Activated CD8-positive, alpha-beta T cell treated with anti-CD3 and anti-CD28 coated beads, Interleukin-2, amount 10 ng/mL, durations not matched to agents 7 days and 5 days (primary cell): ENCODE measurements at regions of chr6 and their contacts with region 1.

Region 1: GRCh38 chr6:30828027-30828960 is 56.0 kb upstream of the DDR1 start:
- DNase-seq: peak; percentile 88
- ATAC-seq: peak; percentile 82
- H3K4me3 Mint-ChIP-seq: peak overlapping the region; percentile 82
- H3K27ac Mint-ChIP-seq: peak overlapping the region; percentile 91
- H3K4me1 Mint-ChIP-seq: peaks cover 69% of the 10 kb centered on the region
- H3K27me3 Mint-ChIP-seq: no peaks in the 10 kb centered on the region

Region 2: DNA sequence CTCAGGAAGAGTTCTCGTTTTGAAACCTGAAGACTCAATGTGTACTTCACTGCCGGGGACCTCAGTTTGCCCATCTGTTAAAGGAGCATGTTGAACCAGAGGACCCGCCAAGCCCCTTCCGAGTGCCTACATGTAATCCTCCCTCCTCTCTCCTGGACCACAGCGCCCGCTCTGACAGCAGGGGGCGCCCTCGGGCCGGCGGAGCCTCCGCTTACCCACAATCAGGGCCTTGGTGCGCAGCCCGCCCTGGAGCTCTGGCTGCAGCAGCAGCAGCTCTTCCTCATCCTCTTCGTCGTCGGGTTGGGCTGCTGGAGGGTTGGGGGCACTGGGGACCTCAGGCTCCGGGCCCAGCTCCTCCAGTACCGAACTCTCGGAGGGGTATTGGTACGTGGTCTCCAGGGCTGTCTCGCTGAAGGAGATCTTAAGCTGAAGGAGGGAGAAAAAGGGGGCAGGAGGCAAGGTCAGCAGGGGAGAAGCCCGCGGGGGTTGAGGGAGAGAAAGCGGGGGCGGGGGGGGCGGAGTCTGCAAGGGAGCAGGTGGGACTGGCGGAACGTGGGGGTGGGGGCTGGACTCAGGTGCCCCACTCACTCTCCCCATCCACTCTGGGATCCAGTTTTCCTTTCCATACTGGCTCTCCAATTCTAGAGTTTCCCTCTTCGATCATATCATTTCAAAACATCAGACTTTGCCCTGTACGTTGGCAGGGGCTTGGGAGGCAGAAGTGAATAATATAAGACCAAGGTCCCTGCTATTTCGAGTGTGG is 149.1 kb before region 1 on chr6:
- CTCF ChIA-PET with region 1: interaction called, 11 read pairs
- POLR2A ChIA-PET with region 1: no interaction called
- DNase-seq: peak; percentile 94
- ATAC-seq: peak; percentile 54
- H3K4me3 Mint-ChIP-seq: peak overlapping the region; percentile 93
- H3K27ac Mint-ChIP-seq: peak overlapping the region; percentile 98
- H3K4me1 Mint-ChIP-seq: peaks cover 30% of the 10 kb centered on the region
- H3K27me3 Mint-ChIP-seq: no peaks in the 10 kb centered on the region

Region 3: DNA sequence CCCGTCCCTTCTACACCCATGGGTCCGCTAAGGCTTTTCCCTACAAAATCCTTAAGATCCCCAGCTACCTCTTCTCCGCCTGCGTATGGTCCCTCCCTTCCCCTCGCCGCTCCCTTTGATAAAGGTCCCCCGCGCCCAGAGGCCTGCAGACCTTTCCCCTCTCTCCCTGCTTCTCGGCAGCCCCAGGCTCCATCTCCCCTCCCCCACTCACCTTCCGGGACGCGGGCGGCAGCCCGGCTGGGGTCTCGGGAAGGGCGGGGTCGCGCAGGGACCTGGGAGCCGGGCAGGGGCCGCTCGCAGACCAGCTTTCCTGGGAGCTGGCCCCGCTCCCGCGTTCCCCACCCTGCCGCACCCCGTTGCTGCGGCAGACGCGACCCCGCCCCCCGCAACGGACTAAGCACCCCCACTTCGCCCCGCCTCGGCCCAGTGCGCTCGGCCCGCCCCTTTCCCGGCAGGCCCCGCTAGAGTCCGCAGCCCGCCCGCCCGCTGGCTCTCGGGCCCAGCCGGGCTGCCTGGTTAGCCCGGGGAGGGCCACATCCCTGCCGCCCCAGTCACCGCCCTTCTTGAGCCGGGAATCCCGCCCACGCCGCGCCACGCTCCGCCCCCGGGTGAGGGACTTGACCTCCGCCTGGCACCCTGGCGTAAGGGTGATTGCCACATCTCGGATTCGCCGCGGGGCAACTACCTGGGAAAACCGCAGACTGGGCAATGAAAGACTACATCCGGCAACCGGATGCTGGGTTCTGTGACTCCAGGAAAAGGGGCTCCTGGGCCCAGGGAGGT is 85.8 kb before region 1 on chr6 and contains the start of gene FLOT1:
- CTCF ChIA-PET with region 1: interaction called, 10 read pairs
- POLR2A ChIA-PET with region 1: interaction called, 5 read pairs
- DNase-seq: peak; percentile 98
- ATAC-seq: peak; percentile 78
- H3K4me3 Mint-ChIP-seq: peak within 1 kb of the TSS; percentile 99
- H3K27ac Mint-ChIP-seq: peak within 1 kb of the TSS; percentile 96
- H3K4me1 Mint-ChIP-seq: peaks cover 69% of the 10 kb centered on the region
- H3K27me3 Mint-ChIP-seq: no peaks in the 10 kb centered on the region
- total RNA-seq, gene FLOT1: 314 to 317 TPM

Region 4: GRCh38 chr6:30814136-30815040 is 13.9 kb before region 1 on chr6:
- CTCF ChIA-PET with region 1: interaction called, 38 read pairs
- POLR2A ChIA-PET with region 1: interaction called, 5 read pairs
- DNase-seq: peak; percentile 62
- ATAC-seq: peak; percentile 77
- H3K4me3 Mint-ChIP-seq: no peak overlapping the region
- H3K27ac Mint-ChIP-seq: peak overlapping the region; percentile 84
- H3K4me1 Mint-ChIP-seq: peaks cover 78% of the 10 kb centered on the region
- H3K27me3 Mint-ChIP-seq: no peaks in the 10 kb centered on the region

Region 5: GRCh38 chr6:30877419-30878371 is 49.4 kb after region 1 on chr6:
- CTCF ChIA-PET with region 1: interaction called, 116 read pairs
- POLR2A ChIA-PET with region 1: interaction called, 15 read pairs
- DNase-seq: peak; percentile 85
- ATAC-seq: peak; percentile 90
- H3K4me3 Mint-ChIP-seq: peak overlapping the region; percentile 68
- H3K27ac Mint-ChIP-seq: peak overlapping the region; percentile 72
- H3K4me1 Mint-ChIP-seq: peaks cover 26% of the 10 kb centered on the region
- H3K27me3 Mint-ChIP-seq: peaks cover 6% of the 10 kb centered on the region

Region 6: GRCh38 chr6:30907758-30908591 is 79.7 kb after region 1 on chr6 and contains the start of gene GTF2H4:
- CTCF ChIA-PET with region 1: interaction called, 69 read pairs
- POLR2A ChIA-PET with region 1: no interaction called
- DNase-seq: peak; percentile 96
- ATAC-seq: peak; percentile 98
- H3K4me3 Mint-ChIP-seq: peak within 1 kb of the TSS; percentile 99
- H3K27ac Mint-ChIP-seq: peak within 1 kb of the TSS; percentile 66
- H3K4me1 Mint-ChIP-seq: peaks cover 22% of the 10 kb centered on the region
- H3K27me3 Mint-ChIP-seq: no peaks in the 10 kb centered on the region
- total RNA-seq, gene GTF2H4: 30.0 to 30.1 TPM

Region 7: DNA sequence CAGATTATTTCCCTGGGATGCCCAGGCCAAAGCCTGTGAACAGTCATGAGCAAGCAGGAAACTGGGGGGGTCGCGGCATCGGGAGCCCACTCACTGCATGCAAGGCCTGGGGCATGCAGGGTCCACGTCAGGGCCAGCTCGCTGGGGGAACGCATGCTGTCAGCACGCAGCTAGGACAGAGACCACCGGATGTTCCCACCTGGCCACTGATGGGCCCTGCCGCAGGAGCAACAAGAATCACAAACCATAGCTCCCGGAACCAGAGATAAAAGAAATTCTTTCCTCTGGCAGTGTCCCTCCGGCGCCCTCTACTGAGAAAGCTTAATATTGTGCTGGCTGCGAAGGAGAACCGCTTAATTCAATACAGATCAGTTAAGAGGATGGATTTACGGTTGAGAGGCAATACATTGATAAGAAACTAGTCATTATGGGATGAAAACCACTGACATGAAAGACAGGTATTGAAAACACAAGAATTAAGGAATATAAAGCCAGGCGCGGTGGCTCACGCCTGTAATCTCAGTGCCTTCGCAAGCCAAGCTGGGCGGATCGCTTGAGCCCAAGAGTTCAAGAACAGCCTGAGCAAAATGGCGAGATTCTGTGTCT is 251.5 kb after region 1 on chr6:
- CTCF ChIA-PET with region 1: interaction called, 43 read pairs
- POLR2A ChIA-PET with region 1: no interaction called
- DNase-seq: peak; percentile 82
- ATAC-seq: peak; percentile 85
- H3K4me3 Mint-ChIP-seq: peak overlapping the region; percentile 40
- H3K27ac Mint-ChIP-seq: no peak overlapping the region
- H3K4me1 Mint-ChIP-seq: peaks cover 9% of the 10 kb centered on the region
- H3K27me3 Mint-ChIP-seq: peaks cover 6% of the 10 kb centered on the region